PC-9 (cell line): ENCODE measurements at regions of chr7 and their contacts with region 1.

Region 1: GRCh38 chr7:117068511-117069145 is 115.3 kb downstream of the ST7 start:
- DNase-seq: no peak
- H3K4me3 ChIP-seq: no peak overlapping the region
- H3K27ac ChIP-seq: no peak overlapping the region
- H3K4me1 ChIP-seq: no peaks in the 10 kb centered on the region
- H3K27me3 ChIP-seq: no peaks in the 10 kb centered on the region
- CTCF ChIP-seq: no peak

Region 2: GRCh38 chr7:117087639-117088396 is 19.2 kb after region 1 on chr7:
- CTCF ChIA-PET with region 1: no interaction called
- POLR2A ChIA-PET with region 1: interaction called, 15 read pairs
- intact Hi-C with region 1: no loop called
- DNase-seq: no peak
- H3K4me3 ChIP-seq: no peak overlapping the region
- H3K27ac ChIP-seq: no peak overlapping the region
- H3K4me1 ChIP-seq: no peaks in the 10 kb centered on the region
- H3K27me3 ChIP-seq: no peaks in the 10 kb centered on the region
- CTCF ChIP-seq: no peak